ENCODE measurements at regions of chr2 and their contacts with region 1.

Region 1: GRCh38 chr2:240560480-240561326 is 546 bp downstream of the DUSP28 start:
- DNase-seq: peak; percentile 81
- ATAC-seq: peak; percentile 70
- H3K4me3 ChIP-seq: peak overlapping the region; percentile 91
- H3K27ac ChIP-seq: peak overlapping the region; percentile 96
- H3K4me1 ChIP-seq: peaks cover 46% of the 10 kb centered on the region
- H3K27me3 ChIP-seq: no peaks in the 10 kb centered on the region
- CTCF ChIP-seq: peak; percentile 6 to 36 (median 19); a peak in 4 of 6 replicates
- EP300 ChIP-seq: no peak
- POLR2A ChIP-seq: no peak
- RAD21 ChIP-seq: no peak

Region 2: DNA sequence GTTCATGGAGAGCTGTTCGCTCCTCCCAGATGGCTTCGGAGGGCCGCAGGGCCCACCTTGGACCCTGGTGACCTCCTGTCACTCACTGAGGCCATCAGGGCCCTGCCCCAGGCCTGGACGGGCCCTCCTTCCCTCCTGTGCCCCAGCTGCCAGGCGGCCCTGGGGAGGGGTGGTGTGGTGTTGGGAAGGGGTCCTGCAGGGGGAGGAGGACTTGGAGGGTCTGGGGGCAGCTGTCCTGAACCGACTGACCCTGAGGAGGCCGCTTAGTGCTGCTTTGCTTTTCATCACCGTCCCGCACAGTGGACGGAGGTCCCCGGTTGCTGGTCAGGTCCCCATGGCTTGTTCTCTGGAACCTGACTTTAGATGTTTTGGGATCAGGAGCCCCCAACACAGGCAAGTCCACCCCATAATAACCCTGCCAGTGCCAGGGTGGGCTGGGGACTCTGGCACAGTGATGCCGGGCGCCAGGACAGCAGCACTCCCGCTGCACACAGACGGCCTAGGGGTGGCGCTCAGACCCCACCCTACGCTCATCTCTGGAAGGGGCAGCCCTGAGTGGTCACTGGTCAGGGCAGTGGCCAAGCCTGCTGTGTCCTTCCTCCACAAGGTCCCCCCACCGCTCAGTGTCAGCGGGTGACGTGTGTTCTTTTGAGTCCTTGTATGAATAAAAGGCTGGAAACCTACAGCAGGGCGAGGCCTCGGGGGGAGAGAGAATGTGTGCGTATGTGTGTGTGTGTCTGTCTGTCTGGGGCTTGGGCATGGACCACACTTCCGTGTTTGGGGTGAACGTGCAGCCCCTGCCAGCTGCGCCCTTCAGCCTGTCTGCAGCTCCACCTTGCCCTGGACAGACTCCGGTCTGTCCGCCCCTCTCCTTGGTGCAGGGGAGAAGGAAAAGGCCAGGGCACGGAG is 93.1 kb before region 1 on chr2:
- CTCF ChIA-PET with region 1: no interaction called
- POLR2A ChIA-PET with region 1: no interaction called
- RAD21 ChIA-PET with region 1: no interaction called
- SMC1A ChIA-PET with region 1: no interaction called
- in situ Hi-C with region 1: no loop called
- intact Hi-C with region 1: no loop called
- DNase-seq: no peak
- ATAC-seq: no peak
- H3K4me3 ChIP-seq: no peak overlapping the region
- H3K27ac ChIP-seq: no peak overlapping the region
- H3K4me1 ChIP-seq: peaks cover 6% of the 10 kb centered on the region
- H3K27me3 ChIP-seq: no peaks in the 10 kb centered on the region
- CTCF ChIP-seq: no peak
- EP300 ChIP-seq: no peak
- POLR2A ChIP-seq: no peak
- RAD21 ChIP-seq: no peak

Region 3: GRCh38 chr2:240538031-240538780 is 22.5 kb before region 1 on chr2:
- CTCF ChIA-PET with region 1: no interaction called
- POLR2A ChIA-PET with region 1: no interaction called
- RAD21 ChIA-PET with region 1: no interaction called
- SMC1A ChIA-PET with region 1: no interaction called
- in situ Hi-C with region 1: no loop called
- intact Hi-C with region 1: no loop called
- DNase-seq: no peak
- ATAC-seq: no peak
- H3K4me3 ChIP-seq: no peak overlapping the region
- H3K27ac ChIP-seq: no peak overlapping the region
- H3K4me1 ChIP-seq: no peaks in the 10 kb centered on the region
- H3K27me3 ChIP-seq: no peaks in the 10 kb centered on the region
- CTCF ChIP-seq: no peak
- EP300 ChIP-seq: no peak
- POLR2A ChIP-seq: no peak
- RAD21 ChIP-seq: no peak

Region 4: GRCh38 chr2:240579771-240580614 is 19.3 kb after region 1 on chr2:
- CTCF ChIA-PET with region 1: interaction called, 196 read pairs
- POLR2A ChIA-PET with region 1: interaction called, 233 read pairs
- RAD21 ChIA-PET with region 1: interaction called, 206 read pairs
- SMC1A ChIA-PET with region 1: interaction called, 124 read pairs
- in situ Hi-C with region 1: no loop called
- intact Hi-C with region 1: loop called (anchors 1 kb)
- DNase-seq: peak; percentile 62
- ATAC-seq: peak; percentile 72
- H3K4me3 ChIP-seq: no peak overlapping the region
- H3K27ac ChIP-seq: peak overlapping the region; percentile 62
- H3K4me1 ChIP-seq: peaks cover 43% of the 10 kb centered on the region
- H3K27me3 ChIP-seq: no peaks in the 10 kb centered on the region
- CTCF ChIP-seq: peak; percentile 71 to 77 (median 77)
- EP300 ChIP-seq: peak in 1 of 2 experiments; percentile 68; a peak in 2 of 4 replicates
- POLR2A ChIP-seq: peak; percentile 53; the same call in 1 of the 2 replicates
- RAD21 ChIP-seq: peak; percentile 51

Region 5: DNA sequence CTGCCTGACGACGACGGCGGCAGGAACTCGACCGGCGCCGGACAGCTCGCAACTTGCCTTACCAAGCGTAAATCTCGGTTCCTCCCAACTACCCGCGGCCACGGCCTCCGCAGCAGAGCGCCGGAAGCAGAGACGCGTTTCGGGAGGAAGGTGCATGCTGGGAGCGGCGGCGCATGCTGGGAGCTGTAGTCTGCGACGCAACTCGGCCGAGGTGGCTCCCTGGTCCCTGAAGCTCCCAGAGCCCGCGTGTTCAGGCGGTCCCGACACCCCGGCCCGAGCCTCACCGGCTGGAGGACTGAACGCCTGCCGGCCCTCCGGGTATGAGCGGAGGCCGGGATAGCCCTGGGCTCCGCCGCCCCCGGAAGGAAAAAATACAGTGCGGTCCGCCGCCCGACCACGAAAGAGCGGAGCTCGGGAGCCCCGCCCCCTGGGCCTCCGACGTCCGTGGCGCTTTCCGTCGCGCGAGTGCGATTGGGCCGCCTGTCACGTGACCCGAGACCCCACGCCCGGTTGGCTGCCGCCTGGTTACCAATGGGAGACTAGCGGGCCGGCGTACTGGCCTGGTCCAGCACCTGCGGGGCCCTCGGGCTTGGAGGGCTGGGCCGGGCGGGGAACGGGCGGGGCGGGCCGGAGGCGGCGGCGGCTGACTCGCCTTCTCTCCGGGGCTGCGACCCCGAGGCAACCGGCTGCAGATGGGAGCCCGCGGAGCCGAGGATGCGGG is 25.7 kb after region 1 on chr2 and contains the start of gene CAPN10:
- CTCF ChIA-PET with region 1: interaction called, 196 read pairs
- POLR2A ChIA-PET with region 1: interaction called, 233 read pairs
- RAD21 ChIA-PET with region 1: interaction called, 206 read pairs
- SMC1A ChIA-PET with region 1: interaction called, 124 read pairs
- in situ Hi-C with region 1: no loop called
- intact Hi-C with region 1: loop called (anchors 1 kb)
- DNase-seq: peak; percentile 73
- ATAC-seq: peak; percentile 79
- H3K4me3 ChIP-seq: peak within 1 kb of the TSS; percentile 95
- H3K27ac ChIP-seq: peak within 1 kb of the TSS; percentile 92
- H3K4me1 ChIP-seq: peaks cover 34% of the 10 kb centered on the region
- H3K27me3 ChIP-seq: no peaks in the 10 kb centered on the region
- CTCF ChIP-seq: no peak
- EP300 ChIP-seq: no peak
- POLR2A ChIP-seq: peak; percentile 95
- RAD21 ChIP-seq: no peak
- polyA plus RNA-seq, gene CAPN10: 0.37 to 1.6 TPM

Region 6: GRCh38 chr2:240622531-240623235 is 62.0 kb after region 1 on chr2:
- CTCF ChIA-PET with region 1: interaction called, 12 read pairs
- POLR2A ChIA-PET with region 1: interaction called, 5 read pairs
- RAD21 ChIA-PET with region 1: interaction called, 5 read pairs
- SMC1A ChIA-PET with region 1: interaction called, 4 read pairs
- in situ Hi-C with region 1: no loop called
- intact Hi-C with region 1: loop called (anchors 2 kb)
- DNase-seq: no peak
- ATAC-seq: no peak
- H3K4me3 ChIP-seq: no peak overlapping the region
- H3K27ac ChIP-seq: no peak overlapping the region
- H3K4me1 ChIP-seq: peaks cover 49% of the 10 kb centered on the region
- H3K27me3 ChIP-seq: no peaks in the 10 kb centered on the region
- CTCF ChIP-seq: no peak
- EP300 ChIP-seq: no peak
- POLR2A ChIP-seq: no peak
- RAD21 ChIP-seq: no peak